Activated CD4-positive, alpha-beta memory T cell treated with anti-CD3 and anti-CD28 coated beads for 36 hours (primary cell): ENCODE measurements at regions of chr1 and their contacts with region 1.

Region 1: DNA sequence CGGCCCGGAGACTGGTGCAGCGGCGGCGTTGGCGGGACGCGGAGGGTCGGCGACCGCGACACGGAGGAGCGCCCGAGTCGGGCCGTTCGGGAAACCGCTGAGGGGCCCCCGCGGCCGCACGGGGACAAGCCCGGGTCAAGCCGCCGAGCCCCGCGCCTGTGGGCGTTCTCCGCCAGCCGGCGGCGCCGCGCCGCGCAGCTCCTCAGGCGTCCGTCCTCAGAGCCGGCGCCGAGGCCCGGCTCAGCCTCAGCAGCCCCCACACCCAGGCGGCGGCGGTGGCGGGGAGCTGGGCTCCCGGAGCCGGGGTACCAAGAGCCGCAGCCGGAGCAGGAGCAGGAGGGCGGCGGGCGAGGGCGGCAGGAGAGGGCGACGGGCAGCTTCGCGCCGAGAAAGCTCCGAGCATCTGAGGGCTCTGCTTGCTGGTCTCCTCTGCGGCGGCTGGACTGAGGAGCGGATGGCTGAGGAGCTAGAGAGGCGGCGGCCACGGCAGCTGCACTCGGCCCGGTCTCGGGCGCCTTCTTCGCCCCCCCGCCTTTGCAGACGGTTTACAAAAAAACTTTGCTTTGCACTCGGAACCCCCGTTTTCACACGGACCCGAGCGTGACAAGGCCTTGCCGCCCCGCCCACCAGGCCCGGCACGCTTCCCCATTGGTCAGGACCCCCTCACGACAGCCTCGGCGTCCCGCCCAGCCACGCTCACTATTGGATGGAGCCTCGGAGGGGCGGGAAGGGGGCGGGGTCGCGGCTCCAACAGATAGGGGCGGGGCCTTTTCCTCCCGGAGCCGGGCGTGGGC is at the start of gene SLC30A1:
- DNase-seq: peak; percentile 99
- H3K4me3 Mint-ChIP-seq: peak within 1 kb of the TSS; percentile 91
- H3K27ac Mint-ChIP-seq: peak within 1 kb of the TSS; percentile 69
- H3K4me1 Mint-ChIP-seq: peaks cover 32% of the 10 kb centered on the region
- H3K27me3 Mint-ChIP-seq: no peaks in the 10 kb centered on the region
- total RNA-seq, gene SLC30A1: 3.5 to 3.9 TPM

Region 2: GRCh38 chr1:209784265-209785169 is 1794.3 kb before region 1 on chr1 and contains the start of gene C1orf74:
- CTCF ChIA-PET with region 1: no interaction called
- POLR2A ChIA-PET with region 1: no interaction called
- intact Hi-C with region 1: loop called (anchors 5 kb)
- DNase-seq: peak; percentile 100
- H3K4me3 Mint-ChIP-seq: peak within 1 kb of the TSS; percentile 93
- H3K27ac Mint-ChIP-seq: peak within 1 kb of the TSS; percentile 93
- H3K4me1 Mint-ChIP-seq: peaks cover 39% of the 10 kb centered on the region
- H3K27me3 Mint-ChIP-seq: peaks cover 3% of the 10 kb centered on the region
- total RNA-seq, gene C1orf74: 3.5 to 3.9 TPM

Region 3: DNA sequence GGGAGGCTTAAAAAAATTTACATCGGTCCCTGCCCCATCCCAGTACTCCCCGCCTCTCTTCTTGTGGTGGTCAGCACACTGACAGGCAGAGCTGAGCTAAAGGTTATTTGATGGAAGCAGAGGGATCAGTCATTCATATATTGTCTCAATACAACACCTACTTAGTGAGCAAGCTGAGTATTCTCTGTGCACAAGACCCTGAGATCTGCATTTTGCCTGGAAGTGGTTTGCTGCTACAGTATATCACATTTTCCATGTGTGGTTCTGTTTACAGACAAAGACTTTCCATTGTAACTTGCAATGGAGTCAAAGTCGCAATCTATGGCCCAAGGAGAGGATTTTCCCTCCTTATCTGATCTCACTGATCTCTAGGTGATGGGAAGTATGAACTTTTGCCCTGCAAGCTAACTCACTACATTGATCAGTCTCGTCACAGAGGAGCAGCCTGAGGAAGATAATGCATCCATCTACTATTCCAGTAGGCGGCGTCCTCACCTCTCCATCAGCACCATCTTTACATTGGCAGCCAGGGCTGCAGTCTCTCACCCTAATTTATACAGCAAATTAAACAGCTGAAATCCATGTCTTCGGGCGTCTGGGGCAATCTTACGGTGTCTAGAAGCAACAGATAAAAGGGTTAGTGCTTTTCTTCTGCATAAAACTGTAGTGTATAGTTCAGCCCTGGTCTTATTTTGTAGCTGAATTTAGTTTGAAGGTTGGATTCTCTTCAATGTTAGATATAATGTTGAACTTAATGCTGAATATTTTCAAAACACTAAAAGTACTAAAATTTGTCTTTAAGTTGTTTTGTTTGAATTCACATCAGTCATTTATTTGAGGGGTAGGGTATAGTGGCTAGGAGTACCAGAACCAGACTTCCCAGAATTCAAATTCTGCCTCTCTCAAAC is 255.4 kb before region 1 on chr1:
- CTCF ChIA-PET with region 1: no interaction called
- POLR2A ChIA-PET with region 1: no interaction called
- intact Hi-C with region 1: loop called (anchors 2 kb)
- DNase-seq: peak; percentile 78
- H3K4me3 Mint-ChIP-seq: no peak overlapping the region
- H3K27ac Mint-ChIP-seq: peak overlapping the region; percentile 68
- H3K4me1 Mint-ChIP-seq: peaks cover 55% of the 10 kb centered on the region
- H3K27me3 Mint-ChIP-seq: no peaks in the 10 kb centered on the region

Region 4: DNA sequence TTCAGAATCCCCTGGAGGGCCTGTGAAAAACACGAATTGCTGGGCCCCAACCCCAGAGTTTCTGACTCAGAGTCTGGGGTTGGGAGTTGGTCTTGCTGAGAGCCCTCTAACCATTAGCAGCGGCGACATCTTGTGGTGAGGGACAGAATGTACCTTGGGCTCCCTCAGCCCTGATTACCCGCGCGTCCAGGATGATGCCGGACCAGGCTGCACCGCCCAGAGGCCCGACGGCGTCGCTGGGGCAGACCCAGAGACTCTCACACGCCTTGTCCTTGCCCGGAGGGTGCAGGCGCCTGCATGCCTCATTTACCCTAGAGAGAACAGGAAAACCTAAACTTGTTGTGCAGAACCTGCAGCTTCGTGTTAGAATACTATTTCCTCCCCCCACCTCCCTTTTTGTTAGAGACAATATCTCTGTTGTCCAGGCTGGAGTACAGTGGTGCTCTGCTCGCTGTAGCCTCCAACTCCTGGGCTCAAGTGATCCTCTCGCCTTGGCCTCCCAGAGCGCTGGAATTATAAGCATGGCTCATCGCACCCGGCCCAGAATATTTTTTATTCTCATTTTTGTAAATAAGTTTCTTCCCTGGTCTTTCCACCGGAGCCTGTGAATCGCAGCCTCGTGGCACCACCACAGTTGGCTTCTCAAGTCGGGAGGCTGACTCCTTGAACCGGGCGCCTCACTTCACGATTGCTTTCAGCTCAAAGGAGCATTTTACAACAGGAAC is 64.6 kb before region 1 on chr1:
- CTCF ChIA-PET with region 1: interaction called, 22 read pairs
- POLR2A ChIA-PET with region 1: interaction called, 3 read pairs
- intact Hi-C with region 1: loop called (anchors 1 kb)
- DNase-seq: peak; percentile 88
- H3K4me3 Mint-ChIP-seq: peak overlapping the region; percentile 56
- H3K27ac Mint-ChIP-seq: no peak overlapping the region
- H3K4me1 Mint-ChIP-seq: peaks cover 23% of the 10 kb centered on the region
- H3K27me3 Mint-ChIP-seq: no peaks in the 10 kb centered on the region

Region 5: GRCh38 chr1:211527006-211527405 is 51.8 kb before region 1 on chr1:
- CTCF ChIA-PET with region 1: no interaction called
- POLR2A ChIA-PET with region 1: no interaction called
- intact Hi-C with region 1: no loop called
- DNase-seq: peak; percentile 16
- H3K4me3 Mint-ChIP-seq: no peak overlapping the region
- H3K27ac Mint-ChIP-seq: no peak overlapping the region
- H3K4me1 Mint-ChIP-seq: peaks cover 10% of the 10 kb centered on the region
- H3K27me3 Mint-ChIP-seq: peaks cover 2% of the 10 kb centered on the region

Region 6: DNA sequence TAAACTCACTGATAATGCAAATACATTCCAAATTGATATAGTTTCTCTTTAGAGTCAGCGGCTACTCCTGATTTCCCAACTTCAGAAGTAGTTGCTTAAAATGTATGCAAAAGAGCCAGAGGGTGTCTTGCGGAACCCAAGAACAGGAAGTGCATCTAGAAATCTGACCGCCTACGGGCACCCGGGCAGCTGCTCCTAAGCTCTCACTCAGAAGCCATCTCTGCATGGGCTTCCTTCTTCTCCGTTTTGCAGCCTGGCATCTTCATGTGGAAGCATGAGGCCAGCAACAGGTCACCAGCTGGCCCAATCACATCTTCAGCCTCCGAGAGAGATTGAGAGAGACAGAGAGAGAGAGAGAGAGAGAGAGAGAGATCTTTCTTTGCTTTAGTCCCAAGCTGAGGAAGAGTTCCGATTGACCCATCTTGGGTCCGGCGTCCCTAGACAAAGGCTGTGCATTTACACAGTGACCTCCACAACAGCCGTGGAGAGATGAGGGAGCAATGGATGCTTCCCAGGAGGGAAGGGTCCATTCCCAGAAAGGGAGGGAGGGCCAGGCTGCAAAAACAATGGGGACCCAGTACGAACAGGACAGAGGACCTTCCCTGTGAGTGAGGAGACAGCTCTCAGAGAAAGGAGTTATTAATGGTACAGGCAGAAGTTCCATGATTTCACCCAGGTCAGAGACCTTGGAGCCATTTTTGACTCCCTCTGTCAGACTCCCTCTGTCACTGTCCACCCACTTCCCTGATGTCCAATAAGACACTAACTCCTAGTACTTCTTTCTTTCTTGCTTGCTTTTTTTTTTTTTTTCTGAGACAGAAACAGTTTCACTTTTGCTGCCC is 28.3 kb after region 1 on chr1:
- CTCF ChIA-PET with region 1: interaction called, 3 read pairs
- POLR2A ChIA-PET with region 1: no interaction called
- intact Hi-C with region 1: loop called (anchors 1 kb)
- DNase-seq: peak; percentile 40
- H3K4me3 Mint-ChIP-seq: peak overlapping the region; percentile 64
- H3K27ac Mint-ChIP-seq: peak overlapping the region; percentile 54
- H3K4me1 Mint-ChIP-seq: peaks cover 9% of the 10 kb centered on the region
- H3K27me3 Mint-ChIP-seq: peaks cover 3% of the 10 kb centered on the region

Region 7: GRCh38 chr1:211675230-211676105 is 96.6 kb after region 1 on chr1 and contains the start of gene NEK2:
- CTCF ChIA-PET with region 1: interaction called, 4 read pairs
- POLR2A ChIA-PET with region 1: interaction called, 4 read pairs
- intact Hi-C with region 1: loop called (anchors 1 kb)
- DNase-seq: peak; percentile 94
- H3K4me3 Mint-ChIP-seq: peak within 1 kb of the TSS; percentile 80
- H3K27ac Mint-ChIP-seq: peak within 1 kb of the TSS; percentile 79
- H3K4me1 Mint-ChIP-seq: peaks cover 12% of the 10 kb centered on the region
- H3K27me3 Mint-ChIP-seq: no peaks in the 10 kb centered on the region
- total RNA-seq, gene NEK2: 42.4 to 45.9 TPM

Region 8: GRCh38 chr1:211939876-211940468 is 361.1 kb after region 1 on chr1:
- CTCF ChIA-PET with region 1: interaction called, 4 read pairs
- POLR2A ChIA-PET with region 1: no interaction called
- intact Hi-C with region 1: loop called (anchors 10 kb)
- DNase-seq: peak; percentile 81
- H3K4me3 Mint-ChIP-seq: no peak overlapping the region
- H3K27ac Mint-ChIP-seq: no peak overlapping the region
- H3K4me1 Mint-ChIP-seq: peaks cover 44% of the 10 kb centered on the region
- H3K27me3 Mint-ChIP-seq: no peaks in the 10 kb centered on the region